ENCODE measurements at regions of chr1 and their contacts with region 1.

Region 1: DNA sequence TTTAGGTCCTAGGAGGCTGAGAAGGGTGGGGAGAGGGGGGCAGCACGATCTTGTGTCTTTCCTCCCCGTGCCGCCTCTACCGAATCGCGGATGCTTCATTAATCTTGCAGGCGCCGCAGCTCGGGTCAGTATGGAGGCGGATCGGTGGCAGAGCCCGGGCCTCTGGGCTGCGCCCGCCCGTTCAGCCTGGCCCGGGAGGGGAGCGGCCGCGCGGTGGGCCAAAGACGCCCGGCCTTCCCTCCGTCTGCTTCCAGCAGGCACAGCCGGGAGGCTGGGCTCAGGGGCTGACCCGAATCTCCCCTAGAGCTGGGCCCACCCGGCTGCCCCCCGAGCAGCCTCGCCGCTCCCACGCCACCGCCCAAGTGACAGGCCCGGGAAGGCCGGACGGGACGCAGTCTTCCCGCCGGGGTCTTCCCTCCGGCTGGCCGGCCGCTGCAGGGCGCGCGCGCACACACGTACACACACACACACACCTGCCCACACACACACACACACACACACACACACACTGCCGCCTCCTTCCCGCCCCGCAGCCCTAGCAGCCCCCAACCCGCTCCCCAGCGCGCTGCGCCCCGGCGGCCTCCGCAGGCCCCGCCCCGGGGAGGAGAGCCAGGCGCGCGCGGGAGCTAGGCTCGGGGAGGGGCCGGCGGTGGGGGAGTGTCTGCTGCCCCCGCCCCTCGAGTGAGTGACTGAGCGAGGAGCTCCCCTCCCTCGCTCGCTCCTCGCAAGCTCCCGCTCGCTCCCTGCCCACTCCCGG is at the start of gene C1orf21:
- DNase-seq: peak; percentile 93
- H3K4me3 Mint-ChIP-seq: peak within 1 kb of the TSS; percentile 90
- H3K27ac Mint-ChIP-seq: peak within 1 kb of the TSS; percentile 79
- H3K4me1 Mint-ChIP-seq: peaks cover 27% of the 10 kb centered on the region
- H3K27me3 Mint-ChIP-seq: no peaks in the 10 kb centered on the region
- CTCF ChIP-seq: no peak
- total RNA-seq, gene C1orf21: 23.2 and 25.3 TPM in 2 replicates

Region 2: DNA sequence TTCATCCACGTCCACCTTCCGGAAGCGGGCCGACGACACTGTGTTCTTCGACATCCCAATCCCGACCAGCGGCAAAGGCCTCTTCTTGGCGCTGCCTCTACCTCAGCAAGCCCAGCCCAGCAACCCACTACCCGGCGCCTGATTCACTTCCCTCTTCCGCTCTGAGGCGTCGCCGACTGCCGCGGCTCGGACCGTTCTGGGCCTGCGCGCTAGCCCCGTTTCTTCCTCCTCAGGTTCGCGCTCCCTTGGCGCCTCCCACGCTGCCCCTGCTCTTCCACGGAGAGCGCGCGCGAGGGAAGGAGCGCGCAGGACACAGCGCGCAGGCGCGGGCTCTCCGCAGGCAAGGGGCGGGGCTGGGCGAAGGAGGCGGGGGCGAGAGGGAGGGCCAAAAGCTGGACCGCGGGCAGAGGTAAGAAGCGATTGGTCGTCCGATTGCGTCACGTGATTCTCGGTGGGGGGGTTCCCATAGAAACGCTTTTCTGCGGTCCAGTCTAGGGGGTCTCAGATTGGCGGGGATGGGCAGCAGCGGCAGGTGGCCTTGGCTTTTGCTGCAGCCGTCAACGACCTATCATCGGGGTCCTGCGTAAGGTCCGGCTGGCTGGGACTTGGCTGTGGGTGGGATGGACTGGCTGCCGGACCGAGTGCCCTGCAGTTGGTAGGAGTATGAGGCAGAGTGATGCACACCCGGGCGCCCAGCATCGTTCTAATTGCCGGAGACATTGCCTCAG is 750.7 kb before region 1 on chr1 and contains the start of gene ARPC5:
- CTCF ChIA-PET with region 1: no interaction called
- POLR2A ChIA-PET with region 1: no interaction called
- intact Hi-C with region 1: loop called (anchors 10 kb)
- DNase-seq: peak; percentile 99
- H3K4me3 Mint-ChIP-seq: peak within 1 kb of the TSS; percentile 100
- H3K27ac Mint-ChIP-seq: peak within 1 kb of the TSS; percentile 97
- H3K4me1 Mint-ChIP-seq: peaks cover 15% of the 10 kb centered on the region
- H3K27me3 Mint-ChIP-seq: no peaks in the 10 kb centered on the region
- CTCF ChIP-seq: no peak
- total RNA-seq, gene ARPC5: 195 and 240 TPM in 2 replicates

Region 3: GRCh38 chr1:184399192-184399847 is 12.8 kb after region 1 on chr1:
- CTCF ChIA-PET with region 1: interaction called, 4 read pairs
- POLR2A ChIA-PET with region 1: interaction called, 44 read pairs
- intact Hi-C with region 1: no loop called
- DNase-seq: peak; percentile 46
- H3K4me3 Mint-ChIP-seq: peak overlapping the region; percentile 13
- H3K27ac Mint-ChIP-seq: no peak overlapping the region
- H3K4me1 Mint-ChIP-seq: peaks cover 51% of the 10 kb centered on the region
- H3K27me3 Mint-ChIP-seq: no peaks in the 10 kb centered on the region
- CTCF ChIP-seq: no peak

Region 4: GRCh38 chr1:184492536-184492935 is 106.0 kb after region 1 on chr1:
- CTCF ChIA-PET with region 1: interaction called, 3 read pairs
- POLR2A ChIA-PET with region 1: interaction called, 10 read pairs
- intact Hi-C with region 1: loop called (anchors 2 kb)
- DNase-seq: no peak
- H3K4me3 Mint-ChIP-seq: no peak overlapping the region
- H3K27ac Mint-ChIP-seq: peak overlapping the region; percentile 81
- H3K4me1 Mint-ChIP-seq: peaks cover 28% of the 10 kb centered on the region
- H3K27me3 Mint-ChIP-seq: no peaks in the 10 kb centered on the region
- CTCF ChIP-seq: no peak

Region 5: GRCh38 chr1:184563308-184563707 is 176.8 kb after region 1 on chr1:
- CTCF ChIA-PET with region 1: interaction called, 10 read pairs
- POLR2A ChIA-PET with region 1: interaction called, 9 read pairs
- intact Hi-C with region 1: loop called (anchors 2 kb)
- DNase-seq: peak; percentile 56
- H3K4me3 Mint-ChIP-seq: no peak overlapping the region
- H3K27ac Mint-ChIP-seq: no peak overlapping the region
- H3K4me1 Mint-ChIP-seq: peaks cover 32% of the 10 kb centered on the region
- H3K27me3 Mint-ChIP-seq: no peaks in the 10 kb centered on the region
- CTCF ChIP-seq: peak; percentile 57

Region 6: DNA sequence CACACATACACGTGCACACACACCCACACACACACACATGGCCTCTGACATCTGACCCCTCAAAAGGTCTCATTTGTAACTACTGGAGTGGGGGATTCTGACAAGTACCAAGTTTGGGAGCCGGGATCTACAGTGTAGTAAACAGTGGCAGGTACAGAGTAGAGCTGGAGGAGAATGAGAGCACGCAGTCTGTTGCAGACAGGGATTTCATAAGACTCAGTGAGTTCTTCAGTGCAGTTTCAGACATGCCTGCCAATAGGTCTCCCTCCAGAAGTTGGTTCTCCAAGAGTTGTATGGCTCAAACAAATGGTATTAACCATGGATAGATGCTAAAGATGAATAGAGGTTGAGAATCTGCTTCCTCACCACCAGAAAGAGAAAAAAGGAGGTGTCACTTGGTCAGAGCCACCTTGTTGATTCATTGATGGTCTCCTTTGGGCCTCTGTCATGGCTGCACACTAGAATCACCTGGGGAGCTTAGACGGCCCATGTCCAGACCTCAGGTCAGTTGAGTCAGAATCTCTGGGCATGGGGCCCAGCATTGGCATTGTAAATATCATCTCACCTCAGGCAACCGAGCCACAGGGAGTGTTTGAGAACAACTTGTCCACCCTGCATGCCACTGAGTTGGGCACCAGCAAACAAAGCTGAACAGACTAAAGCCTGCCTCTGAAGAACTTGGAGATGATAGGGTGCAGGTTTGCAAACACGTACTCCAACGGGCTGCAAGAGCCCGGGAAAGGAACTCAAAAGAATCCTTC is 246.1 kb after region 1 on chr1:
- CTCF ChIA-PET with region 1: interaction called, 6 read pairs
- POLR2A ChIA-PET with region 1: interaction called, 67 read pairs
- intact Hi-C with region 1: no loop called
- DNase-seq: peak; percentile 95
- H3K4me3 Mint-ChIP-seq: peak overlapping the region; percentile 4
- H3K27ac Mint-ChIP-seq: peak overlapping the region; percentile 86
- H3K4me1 Mint-ChIP-seq: peaks cover 64% of the 10 kb centered on the region
- H3K27me3 Mint-ChIP-seq: no peaks in the 10 kb centered on the region
- CTCF ChIP-seq: no peak

Measured in MCF 10A (cell line).